ENCODE measurements at regions of chr4 and their contacts with region 1.

Region 1: DNA sequence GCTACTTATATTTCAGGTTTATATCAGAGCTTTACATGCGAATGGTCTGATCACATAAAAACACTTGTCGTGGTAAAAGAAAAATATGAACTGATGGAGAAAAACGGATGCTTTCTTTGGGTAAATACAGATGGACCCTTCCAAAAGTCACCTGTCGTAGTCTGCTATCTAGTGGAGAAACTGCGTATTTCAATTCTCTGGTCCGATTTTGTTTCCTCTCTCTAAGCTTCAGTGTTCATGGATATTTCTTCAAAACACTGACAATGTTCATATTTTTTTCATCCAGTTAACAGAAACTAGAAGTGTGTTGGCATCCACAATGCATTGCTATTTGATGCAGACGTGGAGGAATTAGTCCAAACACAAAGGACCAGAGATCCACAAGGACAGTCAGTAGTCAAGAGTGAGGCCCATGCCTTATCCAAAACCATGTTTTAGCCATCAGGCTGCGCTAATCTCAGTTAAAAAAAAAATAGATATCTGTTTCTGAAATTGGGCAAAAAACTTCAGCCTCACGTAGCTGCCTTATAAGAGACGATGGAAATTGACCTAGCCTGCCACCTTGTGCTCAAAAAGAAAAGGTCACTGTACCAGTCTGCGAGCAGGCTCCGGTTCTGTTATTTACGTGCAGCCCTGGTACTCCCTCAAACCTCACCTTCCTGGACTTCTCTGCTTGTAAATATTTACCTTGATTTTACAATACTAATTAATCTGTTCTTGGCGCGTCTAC is 16.0 kb downstream of the MEPE start:
- DNase-seq: no peak
- H3K4me3 ChIP-seq: no peak overlapping the region
- H3K27me3 ChIP-seq: no peaks in the 10 kb centered on the region
- CTCF ChIP-seq: peak; percentile 70

Region 2: GRCh38 chr4:87543835-87544461 is 304.8 kb before region 1 on chr4:
- CTCF ChIA-PET with region 1: interaction called, 18 read pairs
- POLR2A ChIA-PET with region 1: no interaction called
- DNase-seq: no peak
- H3K4me3 ChIP-seq: no peak overlapping the region
- H3K27me3 ChIP-seq: no peaks in the 10 kb centered on the region
- CTCF ChIP-seq: peak; percentile 57

Region 3: GRCh38 chr4:87679449-87680169 is 169.2 kb before region 1 on chr4:
- CTCF ChIA-PET with region 1: interaction called, 130 read pairs
- POLR2A ChIA-PET with region 1: interaction called, 5 read pairs
- DNase-seq: peak; percentile 3
- H3K4me3 ChIP-seq: no peak overlapping the region
- H3K27me3 ChIP-seq: no peaks in the 10 kb centered on the region
- CTCF ChIP-seq: peak; percentile 74

Region 4: GRCh38 chr4:87732033-87732765 is 116.6 kb before region 1 on chr4:
- CTCF ChIA-PET with region 1: no interaction called
- POLR2A ChIA-PET with region 1: no interaction called
- DNase-seq: no peak
- H3K4me3 ChIP-seq: no peak overlapping the region
- H3K27me3 ChIP-seq: no peaks in the 10 kb centered on the region; the same call in none of the 2 replicates
- CTCF ChIP-seq: no peak

Region 5: GRCh38 chr4:87865288-87865687 is 16.5 kb after region 1 on chr4:
- CTCF ChIA-PET with region 1: interaction called, 13 read pairs
- POLR2A ChIA-PET with region 1: no interaction called
- DNase-seq: no peak
- H3K4me3 ChIP-seq: no peak overlapping the region
- H3K27me3 ChIP-seq: no peaks in the 10 kb centered on the region
- CTCF ChIP-seq: no peak

Region 6: DNA sequence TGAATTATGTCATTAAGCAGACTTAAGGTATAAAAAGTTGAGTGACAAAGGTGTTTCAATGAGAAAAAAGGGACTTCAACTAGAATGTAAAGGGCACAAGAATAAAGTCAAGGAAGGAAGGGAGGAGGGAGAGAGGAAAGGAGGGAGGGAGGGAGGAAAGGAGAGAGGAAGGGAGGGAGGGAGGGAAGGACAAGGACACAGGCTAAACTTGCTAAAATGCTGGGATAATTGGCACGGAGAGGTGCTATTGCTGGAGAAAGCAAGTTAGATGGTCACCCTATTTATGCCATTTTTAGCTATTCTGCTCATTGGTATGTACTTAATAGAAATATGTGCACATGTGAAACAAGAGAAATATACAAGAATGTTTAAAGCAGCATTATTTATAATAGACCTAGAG is 81.8 kb after region 1 on chr4:
- CTCF ChIA-PET with region 1: no interaction called
- POLR2A ChIA-PET with region 1: no interaction called
- DNase-seq: no peak
- H3K4me3 ChIP-seq: no peak overlapping the region
- H3K27me3 ChIP-seq: no peaks in the 10 kb centered on the region; the same call in none of the 2 replicates
- CTCF ChIP-seq: no peak

Region 7: GRCh38 chr4:87973283-87974169 is 124.7 kb after region 1 on chr4:
- CTCF ChIA-PET with region 1: interaction called, 23 read pairs
- POLR2A ChIA-PET with region 1: no interaction called
- DNase-seq: peak; percentile 84
- H3K4me3 ChIP-seq: peak overlapping the region; percentile 17; the same call in 1 of the 2 replicates
- H3K27me3 ChIP-seq: no peaks in the 10 kb centered on the region
- CTCF ChIP-seq: peak; percentile 83

Region 8: DNA sequence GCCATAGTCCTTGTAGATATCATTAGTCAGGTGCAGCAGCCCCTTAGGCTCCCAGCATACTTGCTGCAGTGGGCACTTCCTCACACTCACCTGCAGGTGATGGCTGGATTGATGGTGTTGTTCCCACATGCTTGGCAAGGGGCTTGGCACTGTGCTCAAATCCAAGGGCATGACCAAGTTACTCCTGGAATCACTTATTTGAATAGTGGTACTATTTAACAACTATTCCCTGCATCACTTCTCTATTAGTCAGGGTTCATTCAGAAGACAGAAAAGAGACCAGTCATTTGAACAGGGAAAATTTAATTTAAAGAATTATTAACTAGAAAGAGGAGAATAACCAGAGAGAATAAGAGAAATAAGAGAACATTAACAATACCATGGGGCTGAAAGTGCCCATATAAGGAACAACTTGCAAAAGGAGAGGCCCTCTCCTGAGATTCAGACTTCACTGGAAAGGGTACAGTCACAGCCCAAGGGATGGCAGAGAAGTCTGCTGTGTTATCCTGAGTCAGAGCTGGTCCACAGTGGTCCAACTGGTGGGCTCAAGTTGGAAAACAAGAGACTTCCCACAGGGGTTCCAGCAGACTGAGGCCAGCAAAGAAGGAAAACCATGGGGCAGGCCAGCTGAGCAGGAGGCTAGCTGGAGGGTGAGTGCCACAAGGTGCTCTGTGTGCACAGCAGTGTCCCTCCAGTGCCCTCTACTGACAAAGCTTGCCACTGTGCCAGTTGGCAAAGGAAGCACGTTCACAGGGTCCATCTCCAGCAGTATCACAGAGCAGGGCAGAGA is 136.5 kb after region 1 on chr4:
- CTCF ChIA-PET with region 1: interaction called, 16 read pairs
- POLR2A ChIA-PET with region 1: no interaction called
- DNase-seq: no peak
- H3K4me3 ChIP-seq: no peak overlapping the region
- H3K27me3 ChIP-seq: no peaks in the 10 kb centered on the region
- CTCF ChIP-seq: peak; percentile 71

Region 9: GRCh38 chr4:88101165-88101564 is 252.4 kb after region 1 on chr4:
- CTCF ChIA-PET with region 1: no interaction called
- POLR2A ChIA-PET with region 1: no interaction called
- DNase-seq: no peak
- H3K4me3 ChIP-seq: no peak overlapping the region
- H3K27me3 ChIP-seq: no peaks in the 10 kb centered on the region
- CTCF ChIP-seq: no peak

Measured in BJ (cell line).